ENCODE measurements at regions of chr3 and their contacts with region 1.

Region 1: DNA sequence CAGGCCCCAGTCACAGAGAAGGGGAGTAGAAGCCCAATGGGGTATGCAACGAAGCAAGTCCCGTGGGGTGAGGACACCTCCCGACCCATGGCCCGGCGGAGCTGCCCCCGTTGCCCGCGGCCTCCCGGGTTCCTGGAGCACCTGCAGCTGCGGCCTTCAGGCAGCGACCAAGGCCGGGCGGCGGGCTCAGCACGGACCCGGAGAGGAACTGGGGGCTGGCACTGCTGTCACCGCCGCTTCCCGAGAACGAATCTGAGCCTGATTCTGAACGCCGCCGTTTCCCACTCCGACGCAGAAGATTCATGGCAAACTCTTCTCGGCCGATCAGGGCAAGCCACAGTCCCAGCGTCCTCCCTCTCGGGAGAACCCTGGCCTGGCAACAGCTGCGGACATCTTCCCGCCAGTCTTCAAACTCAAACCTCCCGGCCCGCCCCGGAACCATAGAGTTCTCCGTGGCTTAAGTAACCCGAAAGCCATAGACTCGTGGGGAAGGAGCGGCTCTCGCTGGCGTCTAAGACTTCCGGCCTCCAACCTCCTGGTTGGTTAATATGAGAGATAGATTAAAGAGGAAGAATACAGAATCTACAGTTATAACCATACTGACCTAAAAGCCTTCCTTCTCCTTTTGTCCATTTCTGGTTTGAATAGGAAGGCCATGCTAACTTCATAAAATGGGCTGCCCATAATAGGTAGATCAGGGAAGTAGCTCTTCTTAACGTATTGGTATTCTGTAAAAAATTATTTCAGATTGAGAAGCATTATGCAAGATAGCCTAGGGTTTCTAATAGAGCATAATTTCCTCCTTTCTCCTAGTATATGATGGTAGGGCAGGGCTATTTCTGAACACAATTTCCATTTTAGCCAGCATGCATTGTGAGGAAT is at the start of gene POLQ:
- DNase-seq: peak; percentile 77
- ATAC-seq: peak; percentile 82
- H3K4me3 ChIP-seq: peak within 1 kb of the TSS; percentile 76
- H3K27ac ChIP-seq: peak within 1 kb of the TSS; percentile 84
- H3K4me1 ChIP-seq: peaks cover 16% of the 10 kb centered on the region
- H3K27me3 ChIP-seq: no peaks in the 10 kb centered on the region
- CTCF ChIP-seq: no peak
- EP300 ChIP-seq: 0 out of 4 replicates have a peak, but pooled peaks of 1 of the 2 experiments have one; percentile 18
- POLR2A ChIP-seq: peak; percentile 83
- RAD21 ChIP-seq: no peak
- polyA plus RNA-seq, gene POLQ: 3.3 to 3.4 TPM

Region 2: GRCh38 chr3:121660356-121661171 is 114.7 kb after region 1 on chr3 and contains the start of gene HCLS1:
- CTCF ChIA-PET with region 1: interaction called, 6 read pairs
- POLR2A ChIA-PET with region 1: interaction called, 5 read pairs
- RAD21 ChIA-PET with region 1: interaction called, 7 read pairs
- SMC1A ChIA-PET with region 1: interaction called, 18 read pairs
- in situ Hi-C with region 1: no loop called
- intact Hi-C with region 1: loop called (anchors 2 kb)
- DNase-seq: peak; percentile 83
- ATAC-seq: peak; percentile 91
- H3K4me3 ChIP-seq: peak within 1 kb of the TSS; percentile 61
- H3K27ac ChIP-seq: peak within 1 kb of the TSS; percentile 97
- H3K4me1 ChIP-seq: peaks cover 26% of the 10 kb centered on the region
- H3K27me3 ChIP-seq: no peaks in the 10 kb centered on the region
- CTCF ChIP-seq: no peak
- EP300 ChIP-seq: 0 out of 4 replicates have a peak, but pooled peaks of 1 of the 2 experiments have one; percentile 25
- POLR2A ChIP-seq: peak; percentile 99
- RAD21 ChIP-seq: no peak
- polyA plus RNA-seq, gene HCLS1: 51.6 to 76.2 TPM

Region 3: GRCh38 chr3:121834696-121835464 is 289.1 kb after region 1 on chr3 and contains the starts of genes EAF2 and IQCB1:
- CTCF ChIA-PET with region 1: interaction called, 3 read pairs
- POLR2A ChIA-PET with region 1: no interaction called
- RAD21 ChIA-PET with region 1: no interaction called
- SMC1A ChIA-PET with region 1: interaction called, 3 read pairs
- in situ Hi-C with region 1: no loop called
- intact Hi-C with region 1: loop called (anchors 5 kb)
- DNase-seq: peak; percentile 93
- ATAC-seq: peak; percentile 95
- H3K4me3 ChIP-seq: peak within 1 kb of the TSS; percentile 95
- H3K27ac ChIP-seq: peak within 1 kb of the TSS; percentile 98
- H3K4me1 ChIP-seq: peaks cover 7% of the 10 kb centered on the region; the same call in 1 of the 2 replicates
- H3K27me3 ChIP-seq: no peaks in the 10 kb centered on the region
- CTCF ChIP-seq: 0 out of 6 replicates have a peak, but pooled peaks of 2 of the 3 experiments have one; percentile 2 to 5
- EP300 ChIP-seq: no peak
- POLR2A ChIP-seq: peak; percentile 97
- RAD21 ChIP-seq: no peak
- polyA plus RNA-seq, gene EAF2: 172 to 193 TPM
- polyA plus RNA-seq, gene IQCB1: 36.0 to 45.1 TPM

Region 4: DNA sequence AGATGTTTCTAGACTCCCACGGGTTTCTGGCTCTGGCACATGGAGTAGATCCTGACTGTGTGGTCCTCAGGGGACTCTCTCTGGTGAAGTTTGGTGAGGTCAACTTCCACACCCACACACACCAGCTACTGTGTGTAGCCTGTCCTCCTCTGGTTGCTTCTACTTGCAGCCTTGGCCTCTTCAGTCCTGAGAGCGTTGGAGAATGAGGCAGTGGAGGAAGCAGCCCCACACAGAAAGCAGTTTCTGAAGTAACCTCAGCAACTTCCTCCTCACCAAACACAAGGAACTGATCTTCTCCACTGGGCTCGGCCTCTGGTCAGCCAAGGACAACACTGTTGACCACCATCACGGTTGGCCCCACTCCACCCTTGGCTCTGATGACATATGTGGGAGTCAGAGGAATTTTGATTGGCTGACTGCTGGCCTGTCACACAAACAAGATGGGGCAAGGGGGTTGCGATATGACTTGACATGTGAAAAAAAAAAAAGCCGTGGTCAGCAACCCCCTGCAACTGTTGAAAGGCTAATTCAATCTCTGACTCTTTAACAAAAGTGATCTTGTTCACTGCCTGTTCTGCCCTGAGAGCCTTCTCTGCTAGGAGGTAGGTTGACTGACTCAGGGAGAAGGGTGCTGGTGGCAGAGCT is 528.9 kb after region 1 on chr3:
- CTCF ChIA-PET with region 1: no interaction called
- POLR2A ChIA-PET with region 1: no interaction called
- RAD21 ChIA-PET with region 1: interaction called, 4 read pairs
- SMC1A ChIA-PET with region 1: no interaction called
- in situ Hi-C with region 1: no loop called
- intact Hi-C with region 1: loop called (anchors 5 kb)
- DNase-seq: peak; percentile 92
- ATAC-seq: peak; percentile 70
- H3K4me3 ChIP-seq: peak overlapping the region; percentile 72
- H3K27ac ChIP-seq: peak overlapping the region; percentile 97
- H3K4me1 ChIP-seq: peaks cover 45% of the 10 kb centered on the region
- H3K27me3 ChIP-seq: no peaks in the 10 kb centered on the region
- CTCF ChIP-seq: no peak
- EP300 ChIP-seq: peak; percentile 65 to 76
- POLR2A ChIP-seq: peak; percentile 73
- RAD21 ChIP-seq: no peak

Region 5: GRCh38 chr3:122258757-122259371 is 713.0 kb after region 1 on chr3:
- CTCF ChIA-PET with region 1: interaction called, 45 read pairs
- POLR2A ChIA-PET with region 1: interaction called, 3 read pairs
- RAD21 ChIA-PET with region 1: interaction called, 20 read pairs
- SMC1A ChIA-PET with region 1: interaction called, 47 read pairs
- in situ Hi-C with region 1: loop called (anchors 5 kb)
- intact Hi-C with region 1: loop called (anchors 2 kb)
- DNase-seq: peak; percentile 83
- ATAC-seq: peak; percentile 86
- H3K4me3 ChIP-seq: no peak overlapping the region
- H3K27ac ChIP-seq: peak overlapping the region; percentile 5; the same call in 1 of the 2 replicates
- H3K4me1 ChIP-seq: peaks cover 5% of the 10 kb centered on the region; the same call in 1 of the 2 replicates
- H3K27me3 ChIP-seq: no peaks in the 10 kb centered on the region
- CTCF ChIP-seq: peak; percentile 75 to 91 (median 88)
- EP300 ChIP-seq: peak; percentile 19 to 58; a peak in 1 of 4 replicates
- POLR2A ChIP-seq: no peak
- RAD21 ChIP-seq: peak; percentile 97

Region 6: DNA sequence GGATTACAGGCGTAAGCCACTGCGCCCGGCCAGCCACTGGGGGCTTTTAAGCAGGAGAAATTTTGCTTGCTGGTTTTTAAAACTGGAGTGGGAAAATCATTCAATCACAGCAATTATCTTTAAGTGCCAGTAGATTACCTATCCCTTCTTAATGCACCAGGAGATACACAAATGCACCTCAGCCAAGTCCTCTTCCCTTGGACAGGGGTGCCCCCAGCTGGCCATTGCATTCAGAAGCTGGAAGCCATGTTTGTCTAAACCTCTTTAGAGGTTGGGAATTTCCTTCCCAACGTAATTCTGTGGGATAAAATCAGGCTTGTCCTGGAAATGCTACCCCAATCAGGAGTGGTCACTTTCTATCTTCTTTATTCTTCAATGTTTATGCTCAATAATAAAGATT is 810.6 kb after region 1 on chr3:
- CTCF ChIA-PET with region 1: interaction called, 7 read pairs
- POLR2A ChIA-PET with region 1: no interaction called
- RAD21 ChIA-PET with region 1: interaction called, 4 read pairs
- SMC1A ChIA-PET with region 1: interaction called, 6 read pairs
- in situ Hi-C with region 1: loop called (anchors 10 kb)
- intact Hi-C with region 1: loop called (anchors 1 kb)
- DNase-seq: no peak
- ATAC-seq: peak; percentile 72
- H3K4me3 ChIP-seq: no peak overlapping the region
- H3K27ac ChIP-seq: no peak overlapping the region
- H3K4me1 ChIP-seq: no peaks in the 10 kb centered on the region
- H3K27me3 ChIP-seq: no peaks in the 10 kb centered on the region
- CTCF ChIP-seq: peak; percentile 49 to 80 (median 51); a peak in 4 of 6 replicates
- EP300 ChIP-seq: no peak
- POLR2A ChIP-seq: no peak
- RAD21 ChIP-seq: peak; percentile 93

Measured in GM12878 (cell line).